Activated T-helper 1 cell treated with anti-CD3 and anti-CD28 coated beads, Interleukin-12 subunit alpha, Interleukin-12 subunit beta, Interleukin-2, Interleukin-4 antibody, amounts not matched to agents 30 ng/mL and 10 ng/mL and 1 ng/mL, durations not matched to agents 14 hours and 24 hours and 36 hours (primary cell): ENCODE measurements at regions of chr12 and their contacts with region 1.

Region 1: GRCh38 chr12:25034676-25035075 is 85.8 kb upstream of the BCAT1 start:
- DNase-seq: no peak
- H3K4me3 Mint-ChIP-seq: no peak overlapping the region
- H3K27ac Mint-ChIP-seq: no peak overlapping the region
- H3K4me1 Mint-ChIP-seq: no peaks in the 10 kb centered on the region
- H3K27me3 Mint-ChIP-seq: peaks cover 15% of the 10 kb centered on the region

Region 2: GRCh38 chr12:25074954-25075353 is 40.3 kb after region 1 on chr12:
- intact Hi-C with region 1: loop called (anchors 5 kb)
- DNase-seq: no peak
- H3K4me3 Mint-ChIP-seq: no peak overlapping the region
- H3K27ac Mint-ChIP-seq: no peak overlapping the region
- H3K4me1 Mint-ChIP-seq: peaks cover 13% of the 10 kb centered on the region
- H3K27me3 Mint-ChIP-seq: no peaks in the 10 kb centered on the region